ENCODE measurements at regions of chr3 and their contacts with region 1.

Region 1: DNA sequence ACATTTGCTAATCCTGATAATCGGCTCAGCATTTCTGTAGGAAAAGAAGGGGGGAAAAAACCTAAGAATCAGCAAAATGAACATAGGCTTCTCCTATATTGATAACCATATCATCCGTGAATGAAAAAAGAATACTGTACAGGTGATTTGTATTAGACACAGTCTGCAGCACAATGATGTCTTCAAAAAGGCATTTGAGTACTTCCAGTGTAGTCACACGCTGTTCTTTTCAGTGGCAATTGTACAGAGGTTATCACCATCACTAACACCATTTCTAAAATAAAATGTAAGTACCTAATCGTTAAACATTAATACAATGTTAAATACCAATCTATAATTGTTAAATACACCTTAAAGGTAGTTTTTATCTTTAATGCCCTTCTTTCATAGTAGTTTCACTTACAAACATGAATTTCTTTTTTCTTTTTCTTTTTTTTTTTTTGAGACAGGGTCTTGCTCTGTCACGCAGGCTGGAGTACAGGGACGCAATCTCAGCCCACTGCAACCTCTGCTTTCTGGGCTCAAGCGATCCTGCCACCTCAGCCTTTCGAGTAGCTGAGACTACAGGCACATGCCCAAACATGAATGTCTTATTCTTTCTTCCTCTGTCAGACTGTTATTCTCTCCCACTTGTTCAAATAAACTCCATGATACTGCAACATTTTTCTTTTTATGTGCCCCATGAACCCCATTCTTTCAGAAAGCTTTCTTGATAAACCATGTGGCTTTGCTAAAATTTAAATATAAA is 18.4 kb downstream of the GOLGB1 start:
- DNase-seq: peak; percentile 6
- ATAC-seq: peak; percentile 21; the same call in 1 of the 2 replicates
- H3K4me3 ChIP-seq: no peak overlapping the region
- H3K27ac ChIP-seq: peak overlapping the region; percentile 91
- H3K4me1 ChIP-seq: peaks cover 2% of the 10 kb centered on the region; the same call in 1 of the 2 replicates
- H3K27me3 ChIP-seq: no peaks in the 10 kb centered on the region
- CTCF ChIP-seq: no peak
- POLR2A ChIP-seq: no peak
- RAD21 ChIP-seq: no peak

Region 2: DNA sequence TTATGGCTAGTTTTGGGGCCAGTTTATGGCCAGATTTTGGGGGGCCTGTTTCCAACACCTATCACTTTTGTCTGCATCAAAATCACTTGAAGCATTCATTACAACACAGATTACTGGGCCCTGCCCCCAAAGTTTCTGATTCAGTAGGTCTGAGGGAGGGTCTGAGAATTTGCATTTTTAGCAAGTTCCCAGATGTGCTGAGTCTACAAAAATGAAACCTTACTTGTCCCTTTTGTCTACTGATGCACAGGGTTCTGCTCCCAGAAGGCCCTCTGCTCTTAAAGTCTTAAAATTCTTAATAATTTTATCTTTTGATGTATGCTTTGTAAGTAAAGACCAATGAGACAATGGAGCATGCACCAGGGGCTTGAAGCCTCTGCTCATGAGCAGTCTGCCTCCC is 331.3 kb before region 1 on chr3:
- CTCF ChIA-PET with region 1: no interaction called
- POLR2A ChIA-PET with region 1: no interaction called
- dilution Hi-C with region 1: no loop called
- in situ Hi-C with region 1: no loop called
- intact Hi-C with region 1: no loop called
- DNase-seq: no peak
- ATAC-seq: no peak
- H3K4me3 ChIP-seq: no peak overlapping the region
- H3K27ac ChIP-seq: no peak overlapping the region
- H3K4me1 ChIP-seq: no peaks in the 10 kb centered on the region
- H3K27me3 ChIP-seq: no peaks in the 10 kb centered on the region
- CTCF ChIP-seq: no peak
- POLR2A ChIP-seq: no peak
- RAD21 ChIP-seq: no peak

Region 3: DNA sequence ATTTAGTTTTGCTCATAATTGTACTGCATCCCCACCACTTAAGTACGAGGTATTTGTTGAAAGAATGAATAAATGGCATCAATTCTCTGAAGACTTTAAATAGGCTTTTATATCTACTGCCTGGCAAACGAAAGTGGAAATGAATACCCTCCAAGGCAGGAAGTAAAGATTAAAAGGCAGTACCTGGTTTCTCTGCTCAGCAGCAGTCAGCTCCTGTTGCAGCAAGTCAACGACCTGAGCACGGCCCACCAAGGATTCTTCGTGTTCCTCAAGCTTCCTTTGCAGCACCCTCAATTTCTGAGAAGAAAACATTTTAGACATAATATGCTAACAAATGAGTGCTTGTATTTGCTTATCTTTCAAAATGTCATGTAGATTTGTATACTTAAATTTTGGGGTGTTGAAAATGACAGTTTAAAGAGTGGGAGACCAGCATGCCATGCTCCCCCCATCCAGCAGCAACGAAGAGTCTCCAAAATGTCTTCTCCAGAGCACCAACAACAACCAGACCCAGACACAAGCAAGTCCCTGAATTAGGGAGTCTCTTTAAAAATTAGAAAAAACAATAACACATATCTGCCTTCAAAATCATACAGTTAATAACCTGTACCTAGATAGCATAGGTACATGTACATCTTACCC is 12.8 kb before region 1 on chr3:
- CTCF ChIA-PET with region 1: interaction called, 3 read pairs
- POLR2A ChIA-PET with region 1: no interaction called
- dilution Hi-C with region 1: no loop called
- in situ Hi-C with region 1: no loop called
- intact Hi-C with region 1: loop called (anchors 1 kb)
- DNase-seq: no peak
- ATAC-seq: no peak
- H3K4me3 ChIP-seq: no peak overlapping the region
- H3K27ac ChIP-seq: no peak overlapping the region
- H3K4me1 ChIP-seq: no peaks in the 10 kb centered on the region
- H3K27me3 ChIP-seq: no peaks in the 10 kb centered on the region
- CTCF ChIP-seq: no peak
- POLR2A ChIP-seq: no peak
- RAD21 ChIP-seq: no peak